ENCODE measurements at regions of chr6 and their contacts with region 1.

Region 1: DNA sequence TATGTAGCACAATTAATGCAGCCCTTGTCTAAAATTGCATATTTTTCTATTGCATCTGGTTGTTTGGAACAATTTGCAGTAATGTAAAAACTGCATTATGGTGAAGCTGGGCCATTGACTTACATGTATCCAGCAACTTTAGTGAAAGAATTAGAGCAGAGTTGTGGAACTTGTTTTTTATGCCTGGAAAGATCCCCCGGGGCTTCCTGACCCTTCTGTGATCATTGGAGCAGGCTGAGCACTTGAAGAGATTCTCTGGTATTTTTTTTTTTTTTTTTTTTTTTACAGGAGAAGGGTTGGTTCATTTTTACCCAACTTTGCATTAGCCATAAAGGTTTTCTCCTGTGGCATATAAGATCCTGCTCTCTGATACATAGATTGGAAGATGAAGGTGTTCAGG is 45.0 kb downstream of the LIN28B start:
- DNase-seq: no peak
- H3K4me3 ChIP-seq: no peak overlapping the region
- H3K27ac ChIP-seq: no peak overlapping the region
- H3K4me1 ChIP-seq: no peaks in the 10 kb centered on the region; a peak in 3 of 7 replicates
- H3K27me3 ChIP-seq: no peaks in the 10 kb centered on the region
- CTCF ChIP-seq: no peak
- EP300 ChIP-seq: no peak
- POLR2A ChIP-seq: no peak
- RAD21 ChIP-seq: no peak

Region 2: DNA sequence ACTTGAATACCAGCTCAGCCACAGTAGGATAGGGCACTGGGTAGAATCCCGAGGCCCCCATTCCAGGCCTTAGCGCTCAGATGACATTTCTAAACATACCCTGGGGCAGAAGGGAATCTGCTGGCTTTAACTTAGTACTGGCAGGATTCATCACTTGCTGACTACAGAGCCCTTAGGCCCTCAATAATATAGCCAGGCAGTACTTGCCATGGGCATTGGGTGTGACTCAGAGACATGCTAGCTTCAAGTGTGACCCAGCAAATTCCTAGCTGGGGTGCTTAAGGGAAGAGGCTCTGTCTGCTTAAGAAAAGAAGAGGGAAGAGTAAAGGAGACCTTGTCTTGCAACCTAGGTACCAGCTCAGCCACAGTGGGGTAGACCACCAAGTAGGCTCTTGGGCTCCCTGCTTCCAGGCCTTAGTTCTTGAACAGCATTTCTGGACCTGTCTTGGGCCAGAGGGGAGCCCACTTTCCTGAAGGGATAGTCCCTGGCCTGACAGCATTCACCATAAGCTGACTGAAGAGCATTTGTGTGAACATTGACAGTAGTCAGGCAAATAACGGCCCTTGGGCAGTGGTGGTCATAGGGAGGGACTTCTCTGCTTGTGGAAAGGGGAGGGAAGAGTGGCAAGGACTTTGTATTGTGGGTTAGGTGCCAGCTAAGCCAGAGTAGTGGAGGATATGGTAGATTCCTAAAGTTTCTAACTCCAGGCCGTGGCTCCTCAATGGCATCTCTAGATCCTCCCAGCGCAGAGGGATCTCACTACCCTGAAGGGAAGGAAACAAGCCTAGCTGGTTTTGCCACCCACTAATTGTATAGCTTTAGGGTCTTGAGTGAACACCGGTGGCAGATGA is 93.6 kb before region 1 on chr6:
- CTCF ChIA-PET with region 1: no interaction called
- POLR2A ChIA-PET with region 1: no interaction called
- DNase-seq: no peak
- H3K4me3 ChIP-seq: no peak overlapping the region
- H3K27ac ChIP-seq: no peak overlapping the region
- H3K4me1 ChIP-seq: 0 out of 7 replicates have a peak, but pooled peaks cover 0 to 4% (median 0%) of the 10 kb centered on the region in 4 experiments
- H3K27me3 ChIP-seq: no peaks in the 10 kb centered on the region
- CTCF ChIP-seq: no peak
- EP300 ChIP-seq: no peak
- POLR2A ChIP-seq: no peak
- RAD21 ChIP-seq: no peak

Region 3: DNA sequence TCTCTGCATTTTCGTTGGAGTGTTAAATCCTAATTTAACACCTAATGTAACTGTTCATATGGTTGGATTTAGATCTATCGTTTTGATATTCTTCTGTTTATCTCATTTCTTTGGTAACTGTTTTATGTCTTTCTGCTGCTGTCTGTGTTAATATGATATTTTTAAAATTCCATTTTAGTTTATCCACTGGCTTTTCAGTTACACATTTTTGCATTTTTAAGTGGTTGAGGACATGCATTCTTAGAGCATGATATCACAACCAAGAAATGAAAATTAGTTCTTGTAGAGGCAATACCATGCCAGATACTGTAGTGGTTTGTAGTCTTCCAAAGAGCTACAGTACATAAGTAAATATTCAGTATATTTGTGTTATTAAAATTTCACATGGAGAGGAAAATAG is 13.6 kb after region 1 on chr6:
- CTCF ChIA-PET with region 1: interaction called, 3 read pairs
- POLR2A ChIA-PET with region 1: interaction called, 11 read pairs
- DNase-seq: no peak
- H3K4me3 ChIP-seq: no peak overlapping the region
- H3K27ac ChIP-seq: no peak overlapping the region
- H3K4me1 ChIP-seq: peaks cover 0 to 3% (median 0%) of the 10 kb centered on the region in 4 experiments; a peak in 2 of 7 replicates
- H3K27me3 ChIP-seq: no peaks in the 10 kb centered on the region
- CTCF ChIP-seq: no peak
- EP300 ChIP-seq: no peak
- POLR2A ChIP-seq: no peak
- RAD21 ChIP-seq: no peak

Region 4: DNA sequence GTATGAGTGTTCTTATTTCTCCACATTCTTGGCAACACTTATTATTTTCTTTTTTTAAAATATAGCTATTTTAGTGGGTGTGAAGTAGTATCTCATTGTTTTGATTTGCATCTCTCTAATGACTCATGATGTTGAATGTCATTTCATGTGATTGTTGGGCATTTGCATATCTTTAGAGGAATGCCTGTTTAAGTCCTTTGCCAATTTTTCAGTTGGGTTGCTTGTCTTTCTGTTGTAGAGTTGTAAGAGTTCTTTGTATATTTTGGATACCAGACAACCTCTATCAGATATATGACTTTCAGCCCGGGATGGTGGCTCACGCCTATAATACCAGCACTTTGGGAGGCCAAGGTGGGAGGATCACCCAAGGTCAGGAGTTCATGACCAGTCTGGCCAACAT is 183.0 kb after region 1 on chr6:
- CTCF ChIA-PET with region 1: no interaction called
- POLR2A ChIA-PET with region 1: no interaction called
- DNase-seq: no peak
- H3K4me3 ChIP-seq: no peak overlapping the region
- H3K27ac ChIP-seq: no peak overlapping the region
- H3K4me1 ChIP-seq: peaks cover 0 to 17% (median 7%) of the 10 kb centered on the region in 4 experiments; a peak in 5 of 7 replicates
- H3K27me3 ChIP-seq: peaks cover 0 to 3% (median 0%) of the 10 kb centered on the region in 4 experiments; a peak in 3 of 7 replicates
- CTCF ChIP-seq: no peak
- EP300 ChIP-seq: no peak
- POLR2A ChIP-seq: no peak
- RAD21 ChIP-seq: no peak

Measured in H1 (cell line).